Activated CD4-positive, alpha-beta memory T cell treated with anti-CD3 and anti-CD28 coated beads for 36 hours (primary cell): ENCODE measurements at regions of chr18 and their contacts with region 1.

Region 1: DNA sequence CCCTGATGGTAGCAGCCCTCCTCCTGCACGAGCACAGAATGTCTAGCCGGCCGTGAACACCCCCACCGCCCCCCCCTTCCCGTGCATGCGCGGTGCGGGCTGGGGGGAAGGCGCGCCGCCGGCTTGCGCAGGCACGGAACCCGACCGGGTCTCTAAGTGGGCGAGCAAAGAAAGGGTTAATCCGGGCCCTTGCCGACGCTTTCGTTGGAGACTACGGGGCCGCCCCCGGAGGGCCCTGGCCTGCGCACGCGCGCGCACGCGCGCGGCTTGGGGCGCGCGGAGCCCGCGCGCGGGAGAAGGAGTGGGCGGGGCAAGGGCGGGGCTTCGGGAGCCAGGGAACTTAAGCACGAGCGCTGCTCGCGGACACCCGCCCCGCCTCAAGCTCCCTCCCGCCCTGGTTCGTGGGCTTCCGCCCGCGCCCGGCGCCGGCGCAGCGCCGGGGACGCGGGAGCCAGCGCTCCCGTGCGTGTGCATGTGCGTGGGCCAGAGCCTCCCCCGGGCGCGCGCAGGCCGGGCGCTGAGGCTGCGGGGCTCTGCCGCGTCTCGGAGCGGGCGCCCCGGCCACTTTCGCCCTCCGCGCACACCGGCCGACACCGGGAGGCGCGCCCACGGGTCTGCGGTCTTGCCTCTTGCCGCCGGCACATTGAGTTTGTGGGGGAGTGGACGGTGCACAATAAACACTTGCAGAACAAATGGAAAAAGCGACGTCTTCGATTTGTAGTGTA is 617 bp upstream of the ZBTB14 start:
- DNase-seq: peak; percentile 97
- H3K4me3 Mint-ChIP-seq: peak overlapping the region; percentile 94
- H3K27ac Mint-ChIP-seq: peak overlapping the region; percentile 97
- H3K4me1 Mint-ChIP-seq: peaks cover 23% of the 10 kb centered on the region
- H3K27me3 Mint-ChIP-seq: no peaks in the 10 kb centered on the region

Region 2: DNA sequence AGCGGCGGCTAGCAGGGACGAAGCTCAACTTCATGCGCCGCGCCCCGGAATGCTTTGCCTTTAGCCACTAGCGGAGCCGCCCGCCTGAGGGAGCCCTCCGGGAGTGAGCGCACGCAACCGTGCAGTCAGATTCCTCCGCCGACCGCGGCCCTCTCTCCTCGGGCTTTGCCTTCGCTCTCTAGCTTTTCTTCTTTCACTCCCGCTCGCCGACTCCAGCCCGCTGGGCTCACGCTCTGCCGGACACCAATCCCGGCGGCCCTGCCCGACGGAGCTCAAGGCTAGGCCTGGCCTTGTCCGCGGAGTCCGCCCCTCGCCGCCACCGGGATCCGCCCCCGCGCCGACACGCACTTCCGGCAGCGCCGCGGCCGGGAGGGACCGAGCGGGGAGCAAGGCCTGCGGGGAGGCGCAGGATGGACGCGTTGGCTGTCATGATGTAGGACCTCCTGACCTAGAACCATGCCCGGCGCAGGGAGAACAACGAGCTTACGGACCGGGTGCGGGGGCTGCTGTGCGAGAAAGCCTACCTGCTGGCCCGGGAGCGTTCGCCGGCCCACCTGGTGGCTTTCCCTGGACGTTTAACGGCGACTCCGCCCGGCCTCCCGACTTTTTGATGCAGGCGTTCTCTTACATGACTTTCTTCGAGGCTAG is 58.3 kb before region 1 on chr18:
- CTCF ChIA-PET with region 1: interaction called, 15 read pairs
- POLR2A ChIA-PET with region 1: interaction called, 117 read pairs
- intact Hi-C with region 1: loop called (anchors 1 kb)
- DNase-seq: peak; percentile 89
- H3K4me3 Mint-ChIP-seq: peak overlapping the region; percentile 90
- H3K27ac Mint-ChIP-seq: peak overlapping the region; percentile 95
- H3K4me1 Mint-ChIP-seq: peaks cover 27% of the 10 kb centered on the region
- H3K27me3 Mint-ChIP-seq: no peaks in the 10 kb centered on the region

Region 3: DNA sequence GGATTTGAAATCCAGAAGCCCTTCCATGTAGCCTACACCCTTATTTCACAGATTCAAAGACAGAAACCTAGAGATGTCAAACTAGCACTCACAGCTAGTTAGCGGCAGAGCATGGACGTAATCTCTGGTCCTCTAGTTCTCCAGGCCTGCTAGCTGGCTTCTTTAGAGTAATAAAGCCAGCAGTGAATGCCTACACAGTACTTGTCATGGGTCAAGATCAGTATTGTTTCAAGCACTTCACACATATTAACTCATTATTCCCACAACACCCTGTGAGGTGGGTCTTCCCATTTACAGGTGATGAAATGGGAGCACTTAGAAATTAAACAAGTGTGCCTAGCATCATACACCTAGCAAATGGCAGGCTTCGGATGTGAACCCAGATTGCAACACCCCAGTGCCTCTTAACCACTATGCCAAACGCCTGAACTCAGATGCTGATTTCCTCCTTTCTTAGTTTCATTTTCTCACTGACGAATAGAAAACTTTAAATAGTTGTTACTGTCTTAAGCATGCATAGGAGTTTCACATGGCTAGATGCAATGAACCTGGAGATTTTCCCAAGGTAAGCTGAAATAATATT is 13.8 kb after region 1 on chr18:
- CTCF ChIA-PET with region 1: interaction called, 5 read pairs
- POLR2A ChIA-PET with region 1: interaction called, 18 read pairs
- intact Hi-C with region 1: loop called (anchors 1 kb)
- DNase-seq: peak; percentile 51
- H3K4me3 Mint-ChIP-seq: peak overlapping the region; percentile 70
- H3K27ac Mint-ChIP-seq: peak overlapping the region; percentile 46
- H3K4me1 Mint-ChIP-seq: peaks cover 17% of the 10 kb centered on the region
- H3K27me3 Mint-ChIP-seq: no peaks in the 10 kb centered on the region

Region 4: GRCh38 chr18:5456577-5457463 is 160.7 kb after region 1 on chr18:
- CTCF ChIA-PET with region 1: no interaction called
- POLR2A ChIA-PET with region 1: no interaction called
- intact Hi-C with region 1: loop called (anchors 10 kb)
- DNase-seq: peak; percentile 12
- H3K4me3 Mint-ChIP-seq: peak overlapping the region; percentile 13
- H3K27ac Mint-ChIP-seq: peak overlapping the region; percentile 25
- H3K4me1 Mint-ChIP-seq: peaks cover 2% of the 10 kb centered on the region
- H3K27me3 Mint-ChIP-seq: no peaks in the 10 kb centered on the region

Region 5: DNA sequence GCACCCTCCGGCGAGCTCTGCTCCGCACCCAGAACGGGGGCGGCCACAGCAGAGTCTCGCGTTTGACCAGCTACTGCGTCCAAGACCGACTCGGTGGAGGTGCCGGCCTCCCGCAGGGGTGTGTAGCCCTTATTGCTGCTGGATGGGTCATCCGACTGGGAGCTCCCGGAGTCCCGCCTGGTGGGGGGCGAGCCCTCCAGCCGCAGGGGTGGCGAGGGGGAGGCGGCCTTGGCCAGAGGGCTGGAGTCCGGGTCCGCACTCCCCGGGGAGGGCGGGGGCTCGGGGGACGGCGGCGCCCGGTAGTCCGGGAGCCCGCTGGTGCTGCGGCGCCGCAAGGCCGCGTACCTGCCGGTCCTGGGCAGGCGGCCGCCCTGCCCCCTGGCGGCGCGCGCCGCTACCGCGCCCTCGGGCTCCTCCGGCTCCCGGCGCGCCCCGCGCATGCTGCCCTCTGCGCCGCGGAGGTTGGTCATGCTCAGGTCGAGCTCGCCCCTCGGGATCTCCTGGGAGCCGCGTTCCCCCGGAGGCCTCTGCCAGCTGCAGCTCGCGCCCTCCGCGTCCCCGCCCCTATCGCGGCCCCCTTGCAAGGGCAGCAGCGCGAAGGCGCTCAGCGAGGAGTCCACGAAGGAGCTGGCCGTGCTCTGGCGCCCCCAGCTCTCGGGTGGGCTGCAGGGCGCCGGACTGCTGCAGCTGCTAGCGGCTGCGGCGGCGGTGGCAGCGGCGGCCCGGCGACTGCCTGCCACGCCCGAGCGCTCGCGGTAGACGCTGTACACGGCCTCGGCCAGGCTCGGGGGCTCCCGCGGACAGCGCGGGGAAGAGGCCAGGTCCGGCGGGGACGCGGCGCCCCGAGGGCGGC is 594.4 kb after region 1 on chr18:
- CTCF ChIA-PET with region 1: no interaction called
- POLR2A ChIA-PET with region 1: no interaction called
- intact Hi-C with region 1: loop called (anchors 10 kb)
- DNase-seq: peak; percentile 40
- H3K4me3 Mint-ChIP-seq: no peak overlapping the region
- H3K27ac Mint-ChIP-seq: no peak overlapping the region
- H3K4me1 Mint-ChIP-seq: peaks cover 9% of the 10 kb centered on the region
- H3K27me3 Mint-ChIP-seq: peaks cover 54% of the 10 kb centered on the region